CD4-positive, alpha-beta T cell (primary cell): ENCODE measurements at regions of chr6 and their contacts with region 1.

Region 1: GRCh38 chr6:31175971-31176370 is 5.5 kb upstream of the POU5F1 start:
- DNase-seq: peak in 1 of 14 experiments; percentile 38
- ATAC-seq: no peak
- H3K4me3 ChIP-seq: no peak overlapping the region
- H3K4me3 Mint-ChIP-seq: peak overlapping the region; percentile 40
- H3K27ac ChIP-seq: no peak overlapping the region
- H3K27ac Mint-ChIP-seq: no peak overlapping the region
- H3K4me1 ChIP-seq: peaks cover 19% of the 10 kb centered on the region
- H3K4me1 Mint-ChIP-seq: peaks cover 22% of the 10 kb centered on the region
- H3K27me3 ChIP-seq: no peaks in the 10 kb centered on the region
- H3K27me3 Mint-ChIP-seq: no peaks in the 10 kb centered on the region
- CTCF ChIP-seq: no peak

Region 2: DNA sequence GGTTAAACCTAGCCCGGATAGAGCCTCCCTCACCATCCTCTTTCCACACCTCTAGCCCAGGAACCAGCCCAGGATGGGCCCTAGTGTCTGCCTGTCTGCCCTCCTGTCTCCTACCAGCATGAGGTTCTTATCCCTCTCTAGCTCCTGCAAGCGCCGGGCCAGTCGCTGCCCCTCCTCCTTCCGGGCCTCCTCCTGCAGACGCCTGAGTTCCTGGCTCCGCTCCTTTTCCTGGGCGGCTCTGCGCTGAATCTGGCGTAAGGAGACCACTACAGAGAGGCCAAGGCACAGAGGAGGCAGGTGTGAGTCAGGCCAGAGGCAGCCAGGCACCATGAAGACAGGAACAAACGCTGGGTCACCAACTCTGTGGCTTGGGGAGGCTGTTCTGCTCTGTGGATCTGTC is 32.8 kb before region 1 on chr6:
- CTCF ChIA-PET with region 1: no interaction called
- POLR2A ChIA-PET with region 1: no interaction called
- intact Hi-C with region 1: loop called in 1 of 2 experiments (anchors 5 kb)
- DNase-seq: no peak
- ATAC-seq: no peak
- H3K4me3 ChIP-seq: no peak overlapping the region
- H3K4me3 Mint-ChIP-seq: no peak overlapping the region
- H3K27ac ChIP-seq: no peak overlapping the region
- H3K27ac Mint-ChIP-seq: no peak overlapping the region
- H3K4me1 ChIP-seq: no peaks in the 10 kb centered on the region
- H3K4me1 Mint-ChIP-seq: no peaks in the 10 kb centered on the region
- H3K27me3 ChIP-seq: no peaks in the 10 kb centered on the region
- H3K27me3 Mint-ChIP-seq: no peaks in the 10 kb centered on the region
- CTCF ChIP-seq: no peak